ENCODE measurements at regions of chr1 and their contacts with region 1.

Region 1: DNA sequence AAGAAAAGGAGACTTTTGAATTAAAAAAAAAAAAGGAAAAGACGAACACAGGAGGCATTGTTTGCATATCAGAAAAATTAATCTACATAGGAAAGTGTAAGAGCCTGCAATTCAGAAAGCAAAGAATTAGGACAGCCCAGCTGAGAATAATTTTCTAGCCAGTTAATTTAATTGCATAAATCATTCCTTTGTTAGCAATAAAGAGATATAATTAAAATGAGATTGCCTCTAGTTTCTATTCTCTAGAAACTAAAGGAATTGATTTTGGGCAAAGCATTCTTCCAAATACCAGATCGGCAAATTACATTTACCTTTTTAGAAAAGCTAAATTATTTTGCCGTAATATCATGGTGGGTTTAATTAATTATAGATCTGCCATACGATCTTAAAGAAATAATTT is 46.0 kb downstream of the NUF2 start:
- DNase-seq: no peak
- H3K4me3 ChIP-seq: peak overlapping the region in 2 of 59 donors; percentile 5 to 27
- H3K27ac ChIP-seq: peak overlapping the region in 48 of 59 donors; percentile 3 to 84 (median 58)
- H3K27me3 ChIP-seq: no peaks in the 10 kb centered on the region
- CTCF ChIP-seq: no peak

Region 2: GRCh38 chr1:163406772-163407171 is 39.1 kb after region 1 on chr1:
- intact Hi-C with region 1: loop called in 1 of 2 experiments (anchors 5 kb)
- DNase-seq: no peak
- H3K4me3 ChIP-seq: no peak overlapping the region
- H3K27ac ChIP-seq: no peak overlapping the region
- H3K27me3 ChIP-seq: no peaks in the 10 kb centered on the region
- CTCF ChIP-seq: no peak

Region 3: GRCh38 chr1:163523373-163524029 is 155.8 kb after region 1 on chr1:
- intact Hi-C with region 1: loop called in 1 of 2 experiments (anchors 5 kb)
- DNase-seq: no peak
- H3K4me3 ChIP-seq: no peak overlapping the region
- H3K27ac ChIP-seq: no peak overlapping the region
- H3K27me3 ChIP-seq: no peaks in the 10 kb centered on the region
- CTCF ChIP-seq: no peak

Measured in dorsolateral prefrontal cortex (tissue), 120 donors.